ENCODE measurements at regions of chr22 and their contacts with region 1.

Region 1: DNA sequence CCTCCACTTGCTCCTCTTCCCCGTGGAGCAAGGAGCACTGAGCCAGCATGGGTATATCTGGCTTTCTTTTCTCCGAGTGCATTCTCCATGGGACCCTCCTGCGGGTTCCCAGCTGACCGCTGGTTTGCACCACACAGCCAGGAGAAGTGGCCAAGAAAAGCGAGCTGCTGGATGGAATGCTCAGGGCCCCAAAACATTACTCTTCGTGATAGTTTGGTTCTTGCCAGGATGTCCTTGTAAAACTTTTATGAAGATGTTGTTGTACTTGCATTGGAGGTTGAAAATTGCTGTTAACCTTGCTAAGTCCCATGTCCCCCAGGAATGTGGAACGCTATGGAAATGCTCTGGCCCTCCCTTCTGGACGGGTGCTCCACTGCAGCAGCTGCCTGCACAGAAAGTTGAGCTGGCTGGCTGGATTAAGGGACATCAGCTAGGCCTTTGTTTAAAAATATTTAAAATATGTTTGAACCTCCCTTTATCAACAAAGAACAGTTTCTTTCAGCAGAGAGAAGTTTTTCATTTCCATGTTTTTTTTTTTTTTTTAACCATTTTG is 68.7 kb downstream of the ZNRF3 start:
- DNase-seq: peak; percentile 65
- ATAC-seq: peak; percentile 73
- H3K4me3 ChIP-seq: no peak overlapping the region
- H3K27ac ChIP-seq: peak overlapping the region; percentile 64
- H3K4me1 ChIP-seq: peaks cover 98% of the 10 kb centered on the region
- H3K27me3 ChIP-seq: no peaks in the 10 kb centered on the region
- CTCF ChIP-seq: peak; percentile 76
- EP300 ChIP-seq: no peak
- POLR2A ChIP-seq: no peak
- RAD21 ChIP-seq: peak; percentile 66

Region 2: GRCh38 chr22:28855355-28856094 is 96.5 kb before region 1 on chr22:
- CTCF ChIA-PET with region 1: interaction called, 3 read pairs
- POLR2A ChIA-PET with region 1: interaction called, 4 read pairs
- in situ Hi-C with region 1: no loop called
- intact Hi-C with region 1: loop called (anchors 5 kb)
- DNase-seq: peak; percentile 70
- ATAC-seq: peak; percentile 79
- H3K4me3 ChIP-seq: no peak overlapping the region
- H3K27ac ChIP-seq: no peak overlapping the region
- H3K4me1 ChIP-seq: peaks cover 26% of the 10 kb centered on the region
- H3K27me3 ChIP-seq: no peaks in the 10 kb centered on the region
- CTCF ChIP-seq: peak; percentile 90
- EP300 ChIP-seq: no peak
- POLR2A ChIP-seq: no peak
- RAD21 ChIP-seq: peak; percentile 86

Region 3: DNA sequence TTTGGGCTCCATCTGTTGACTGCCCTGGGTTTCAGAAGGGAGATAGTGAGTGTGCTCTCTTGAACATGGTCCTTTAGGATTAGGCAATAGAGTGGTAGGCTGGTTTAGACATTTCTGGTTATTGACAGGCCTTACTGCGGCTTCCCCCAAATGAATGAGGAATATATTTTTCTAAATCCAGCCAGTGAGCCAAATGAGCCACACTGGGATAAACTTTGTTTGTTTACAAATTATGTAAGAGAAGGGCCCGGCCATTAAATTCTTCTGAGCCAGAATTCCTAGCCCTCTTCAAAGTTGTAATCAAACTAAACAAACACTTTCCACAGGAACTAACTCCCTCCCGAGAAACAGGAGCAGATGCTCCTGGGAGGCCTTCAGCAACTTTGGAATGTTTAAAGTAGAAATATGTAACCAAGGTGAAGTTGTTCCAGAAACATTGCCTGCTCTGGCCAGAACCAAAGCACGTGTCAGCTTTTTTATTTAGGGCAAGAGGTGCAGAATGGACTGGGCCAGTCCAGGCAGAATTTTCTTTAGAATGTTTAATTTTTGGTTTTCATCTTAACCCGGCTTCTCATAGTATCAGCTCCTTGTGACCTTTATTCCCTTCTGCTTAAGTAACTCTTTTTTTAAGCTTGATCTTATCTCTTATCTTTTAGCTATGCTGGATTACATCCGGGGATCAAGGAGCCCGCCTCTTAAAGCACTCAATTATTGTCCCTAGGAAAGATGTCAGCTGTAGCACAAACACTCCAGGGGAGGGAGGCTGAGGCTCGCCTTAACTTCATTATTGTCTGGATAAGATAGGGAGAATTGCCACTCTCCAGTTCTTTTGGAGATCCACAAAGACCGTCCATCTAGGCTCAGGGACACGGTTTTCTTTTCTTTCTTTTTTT is 40.0 kb before region 1 on chr22:
- CTCF ChIA-PET with region 1: no interaction called
- POLR2A ChIA-PET with region 1: no interaction called
- in situ Hi-C with region 1: no loop called
- intact Hi-C with region 1: loop called (anchors 1 kb)
- DNase-seq: peak; percentile 89
- ATAC-seq: peak; percentile 81
- H3K4me3 ChIP-seq: peak overlapping the region in 2 of 3 experiments; percentile 15; a peak in 2 of 6 replicates
- H3K27ac ChIP-seq: peak overlapping the region; percentile 71
- H3K4me1 ChIP-seq: peaks cover 100% of the 10 kb centered on the region
- H3K27me3 ChIP-seq: no peaks in the 10 kb centered on the region
- CTCF ChIP-seq: peak; percentile 32; the same call in 1 of the 2 replicates
- EP300 ChIP-seq: peak in 1 of 2 experiments; percentile 79; a peak in 2 of 4 replicates
- POLR2A ChIP-seq: 0 out of 4 replicates have a peak, but pooled peaks of 1 of the 2 experiments have one; percentile 23
- RAD21 ChIP-seq: no peak

Region 4: DNA sequence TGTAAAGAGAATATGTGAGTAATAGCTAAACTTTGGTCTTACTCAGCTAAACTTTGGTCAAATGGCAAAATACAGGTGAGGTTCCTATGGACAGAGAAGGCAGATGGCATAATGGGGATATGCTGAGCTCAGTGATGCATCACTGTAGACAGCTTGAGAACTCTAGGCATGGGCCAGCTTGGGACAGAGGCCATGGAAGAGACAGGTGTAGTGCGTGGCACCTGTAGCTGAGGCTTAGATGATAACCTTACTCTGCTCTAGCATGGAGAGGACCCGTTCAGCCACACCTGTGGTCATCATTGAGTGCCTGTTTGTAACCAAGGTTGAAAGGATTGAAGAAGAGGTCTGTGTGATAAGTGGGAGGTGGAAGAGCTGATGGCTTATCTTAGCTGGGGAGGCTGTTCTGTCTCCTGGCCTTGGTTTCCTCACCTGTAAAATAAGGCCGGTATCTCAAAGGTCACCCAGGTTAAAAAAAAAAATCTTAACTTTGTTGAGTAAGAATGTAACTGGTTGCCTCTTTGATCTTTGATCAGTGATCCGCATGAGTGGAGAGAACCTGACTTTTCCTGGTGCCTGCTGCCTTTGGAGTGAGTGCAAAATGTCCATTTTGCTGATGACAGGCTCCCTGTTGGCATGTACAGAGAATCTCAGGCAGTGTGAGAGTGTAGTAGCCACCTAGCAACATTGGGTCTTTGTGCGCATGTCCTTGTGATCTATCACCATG is 20.0 kb before region 1 on chr22:
- CTCF ChIA-PET with region 1: no interaction called
- POLR2A ChIA-PET with region 1: interaction called, 3 read pairs
- in situ Hi-C with region 1: no loop called
- intact Hi-C with region 1: loop called (anchors 2 kb)
- DNase-seq: peak; percentile 63
- ATAC-seq: peak; percentile 76
- H3K4me3 ChIP-seq: peak overlapping the region in 1 of 3 experiments; percentile 16; a peak in 1 of 6 replicates
- H3K27ac ChIP-seq: peak overlapping the region; percentile 55
- H3K4me1 ChIP-seq: peaks cover 98% of the 10 kb centered on the region
- H3K27me3 ChIP-seq: no peaks in the 10 kb centered on the region
- CTCF ChIP-seq: no peak
- EP300 ChIP-seq: peak in 1 of 2 experiments; percentile 69; a peak in 2 of 4 replicates
- POLR2A ChIP-seq: no peak
- RAD21 ChIP-seq: no peak

Region 5: DNA sequence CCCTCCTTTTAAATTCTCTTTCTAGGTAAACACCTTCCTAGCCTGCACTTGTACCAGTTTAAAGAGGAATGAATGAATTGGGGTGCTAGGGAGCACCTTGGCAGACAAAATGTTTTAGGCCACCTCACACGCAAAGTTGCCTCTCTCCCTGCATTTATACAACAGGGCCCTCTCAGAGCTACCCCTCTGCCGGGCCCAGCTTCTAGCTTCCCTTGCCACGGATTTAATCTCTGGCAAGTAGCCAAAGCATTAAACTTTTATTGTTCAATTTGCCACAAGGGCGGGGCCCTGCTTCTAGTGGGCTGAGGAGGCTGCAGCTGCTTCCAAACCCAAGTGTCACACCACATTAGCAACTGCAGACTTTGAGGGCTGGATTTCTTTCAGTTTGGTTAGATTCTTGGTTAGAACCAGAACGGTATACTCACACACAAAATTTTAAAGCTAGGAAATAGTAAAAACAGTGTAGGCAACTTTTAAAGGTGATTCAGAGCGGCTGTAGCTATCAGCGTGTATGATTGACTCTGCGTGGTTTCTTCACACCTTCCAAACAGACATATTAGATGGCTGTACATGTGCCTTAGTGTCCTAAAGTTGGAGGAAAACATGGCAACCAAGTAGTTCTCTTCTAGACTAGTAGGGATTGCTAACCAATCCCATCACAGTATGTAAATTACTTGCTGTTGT is 127.3 kb after region 1 on chr22:
- CTCF ChIA-PET with region 1: no interaction called
- POLR2A ChIA-PET with region 1: no interaction called
- in situ Hi-C with region 1: no loop called
- intact Hi-C with region 1: no loop called
- DNase-seq: no peak
- ATAC-seq: no peak
- H3K4me3 ChIP-seq: no peak overlapping the region
- H3K27ac ChIP-seq: no peak overlapping the region
- H3K4me1 ChIP-seq: peaks cover 11% of the 10 kb centered on the region
- H3K27me3 ChIP-seq: no peaks in the 10 kb centered on the region
- CTCF ChIP-seq: no peak
- EP300 ChIP-seq: no peak
- POLR2A ChIP-seq: no peak
- RAD21 ChIP-seq: no peak